Heart left ventricle (tissue), 16 donors: ENCODE measurements at regions of chr13 and their contacts with region 1.

Region 1: GRCh38 chr13:40671956-40672764 is 5.7 kb upstream of the FOXO1 start:
- DNase-seq: no peak
- ATAC-seq: peak in 1 of 4 donors; percentile 46
- H3K4me3 ChIP-seq: no peak overlapping the region
- H3K27ac ChIP-seq: no peak overlapping the region
- H3K4me1 ChIP-seq: peaks cover 0 to 18% (median 12%) of the 10 kb centered on the region in 12 donors
- H3K27me3 ChIP-seq: no peaks in the 10 kb centered on the region
- CTCF ChIP-seq: no peak
- POLR2A ChIP-seq: no peak

Region 2: GRCh38 chr13:40318366-40318765 is 353.8 kb before region 1 on chr13:
- intact Hi-C with region 1: loop called in 6 of 10 experiments (anchors 5 to 10 kb)
- DNase-seq: peak; percentile 56 to 81 (median 70)
- ATAC-seq: peak in 3 of 4 donors; percentile 43 to 63 (median 62)
- H3K4me3 ChIP-seq: no peak overlapping the region
- H3K27ac ChIP-seq: no peak overlapping the region
- H3K4me1 ChIP-seq: peaks cover 0 to 27% (median 14%) of the 10 kb centered on the region in 12 donors
- H3K27me3 ChIP-seq: no peaks in the 10 kb centered on the region
- CTCF ChIP-seq: no peak
- POLR2A ChIP-seq: no peak

Region 3: GRCh38 chr13:40749327-40749726 is 77.2 kb after region 1 on chr13:
- intact Hi-C with region 1: no loop called
- DNase-seq: no peak
- ATAC-seq: no peak
- H3K4me3 ChIP-seq: no peak overlapping the region
- H3K27ac ChIP-seq: no peak overlapping the region
- H3K4me1 ChIP-seq: no peaks in the 10 kb centered on the region
- H3K27me3 ChIP-seq: no peaks in the 10 kb centered on the region
- CTCF ChIP-seq: peak in 5 of 12 donors; percentile 5 to 29 (median 20)
- POLR2A ChIP-seq: no peak

Region 4: DNA sequence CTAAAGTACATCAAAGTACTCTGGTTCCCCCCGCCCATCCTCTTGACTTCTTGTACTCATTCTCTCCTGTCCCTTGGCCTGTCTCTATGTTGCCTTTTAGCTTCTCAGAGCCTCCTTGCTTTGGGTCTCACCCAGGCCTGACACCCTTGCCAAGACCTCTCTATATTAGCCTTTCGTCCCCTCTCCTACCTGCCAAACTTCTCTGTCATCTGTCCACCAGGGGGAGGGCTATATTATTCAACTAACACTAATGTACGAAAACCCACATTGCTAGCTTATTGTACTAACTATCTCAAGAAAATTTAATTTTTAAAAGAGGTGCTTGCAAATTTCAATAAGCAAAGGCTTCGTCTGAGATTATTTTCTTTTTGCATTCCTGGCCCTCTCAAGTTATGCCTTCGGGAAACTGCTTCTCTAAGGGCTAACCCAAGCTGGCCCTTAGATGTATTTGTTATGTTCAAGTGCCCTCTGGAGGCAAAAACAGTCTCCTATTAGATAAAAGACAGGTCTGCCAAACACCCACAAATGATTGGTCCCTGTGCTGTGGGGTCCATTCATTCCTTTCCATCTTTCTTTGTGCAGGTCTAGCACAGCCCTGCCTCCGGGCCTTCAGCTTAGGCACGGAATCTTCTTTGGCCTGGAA is 105.1 kb after region 1 on chr13:
- intact Hi-C with region 1: loop called in 1 of 10 experiments (anchors 5 kb)
- DNase-seq: no peak
- ATAC-seq: peak; percentile 72 to 87 (median 80)
- H3K4me3 ChIP-seq: peak overlapping the region in 8 of 12 donors; percentile 21 to 54 (median 34)
- H3K27ac ChIP-seq: peak overlapping the region in 1 of 12 donors; percentile 79
- H3K4me1 ChIP-seq: peaks cover 0 to 19% (median 2%) of the 10 kb centered on the region in 12 donors
- H3K27me3 ChIP-seq: no peaks in the 10 kb centered on the region
- CTCF ChIP-seq: peak; percentile 36 to 81 (median 68)
- POLR2A ChIP-seq: no peak